ENCODE measurements at regions of chr1 and their contacts with region 1.

Region 1: GRCh38 chr1:37458528-37458927 is 15.9 kb upstream of the ZC3H12A start:
- H3K4me3 Mint-ChIP-seq: no peak overlapping the region
- H3K27ac Mint-ChIP-seq: no peak overlapping the region
- H3K4me1 Mint-ChIP-seq: peaks cover 26% of the 10 kb centered on the region
- H3K27me3 Mint-ChIP-seq: no peaks in the 10 kb centered on the region

Region 2: GRCh38 chr1:37403170-37403569 is 55.4 kb before region 1 on chr1:
- intact Hi-C with region 1: no loop called
- H3K4me3 Mint-ChIP-seq: no peak overlapping the region
- H3K27ac Mint-ChIP-seq: no peak overlapping the region
- H3K4me1 Mint-ChIP-seq: no peaks in the 10 kb centered on the region
- H3K27me3 Mint-ChIP-seq: peaks cover 5% of the 10 kb centered on the region

Region 3: DNA sequence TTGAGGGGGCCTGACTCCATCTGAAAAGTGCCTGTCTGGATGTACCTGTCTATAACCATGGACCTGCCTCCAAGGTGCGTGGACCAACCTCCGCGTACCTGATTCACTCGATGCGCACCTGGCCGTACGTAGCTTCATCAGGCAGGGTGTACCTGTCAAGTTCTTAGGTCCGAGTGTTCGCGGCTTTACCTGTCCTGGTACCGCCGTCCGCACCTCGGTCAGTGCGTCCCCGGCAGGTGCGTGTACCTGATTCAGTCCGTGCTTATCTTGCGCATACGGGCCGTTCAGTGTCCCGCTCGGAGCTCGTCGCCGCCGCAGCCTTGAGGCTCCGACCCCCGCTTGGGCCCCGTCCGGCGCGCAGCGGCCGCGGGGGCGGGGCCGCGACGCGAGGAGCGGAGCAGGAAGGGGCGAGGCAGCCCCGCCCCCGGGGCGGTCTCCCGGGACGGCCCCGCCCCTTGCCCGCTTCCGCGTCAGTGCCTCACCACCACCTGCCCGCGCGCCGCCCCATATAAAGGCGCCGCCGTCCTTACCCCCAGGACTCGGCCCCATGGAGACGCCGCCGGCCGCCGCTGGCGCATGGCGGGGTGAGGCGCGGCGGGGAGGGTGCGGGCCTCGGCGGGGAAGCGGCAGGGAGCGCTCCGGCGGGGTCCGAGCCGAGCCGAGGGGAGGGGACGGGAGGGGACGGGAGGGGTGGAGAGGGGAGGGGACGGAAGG is 15.7 kb after region 1 on chr1 and contains the start of gene ZC3H12A:
- intact Hi-C with region 1: loop called (anchors 2 kb)
- H3K4me3 Mint-ChIP-seq: peak within 1 kb of the TSS; percentile 83
- H3K27ac Mint-ChIP-seq: peak within 1 kb of the TSS; percentile 82
- H3K4me1 Mint-ChIP-seq: peaks cover 74% of the 10 kb centered on the region
- H3K27me3 Mint-ChIP-seq: no peaks in the 10 kb centered on the region

Region 4: GRCh38 chr1:37486680-37487618 is 28.4 kb after region 1 on chr1:
- intact Hi-C with region 1: loop called (anchors 1 kb)
- H3K4me3 Mint-ChIP-seq: peak overlapping the region; percentile 22
- H3K27ac Mint-ChIP-seq: peak overlapping the region; percentile 92
- H3K4me1 Mint-ChIP-seq: peaks cover 67% of the 10 kb centered on the region
- H3K27me3 Mint-ChIP-seq: no peaks in the 10 kb centered on the region

Region 5: GRCh38 chr1:37509181-37509580 is 50.7 kb after region 1 on chr1:
- intact Hi-C with region 1: loop called (anchors 5 kb)
- H3K4me3 Mint-ChIP-seq: no peak overlapping the region
- H3K27ac Mint-ChIP-seq: no peak overlapping the region
- H3K4me1 Mint-ChIP-seq: peaks cover 40% of the 10 kb centered on the region
- H3K27me3 Mint-ChIP-seq: no peaks in the 10 kb centered on the region

Region 6: GRCh38 chr1:37553927-37554808 is 95.6 kb after region 1 on chr1 and contains the start of gene SNIP1:
- intact Hi-C with region 1: loop called (anchors 5 kb)
- H3K4me3 Mint-ChIP-seq: peak within 1 kb of the TSS; percentile 93
- H3K27ac Mint-ChIP-seq: peak within 1 kb of the TSS; percentile 93
- H3K4me1 Mint-ChIP-seq: peaks cover 31% of the 10 kb centered on the region
- H3K27me3 Mint-ChIP-seq: no peaks in the 10 kb centered on the region

Region 7: DNA sequence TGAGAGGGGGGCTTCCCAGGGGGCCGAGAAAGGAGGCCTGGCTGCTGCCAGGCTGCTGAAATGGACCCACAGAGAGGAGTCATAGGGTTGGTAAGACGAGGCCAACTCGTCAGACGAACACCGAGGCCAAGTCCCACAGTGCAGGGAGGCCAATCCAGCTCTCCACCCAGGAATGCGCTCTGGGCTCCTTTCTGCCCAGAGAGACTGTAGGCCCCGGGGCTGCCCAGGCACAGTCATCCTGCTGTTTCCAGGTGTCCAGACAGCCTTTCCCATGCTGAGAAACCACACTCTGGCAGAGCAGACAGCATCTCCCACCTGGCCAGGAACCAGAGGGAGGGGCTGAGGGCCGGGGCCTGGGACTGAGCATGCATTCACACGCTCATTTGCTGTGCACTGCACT is 202.9 kb after region 1 on chr1:
- intact Hi-C with region 1: no loop called
- H3K4me3 Mint-ChIP-seq: no peak overlapping the region
- H3K27ac Mint-ChIP-seq: no peak overlapping the region
- H3K4me1 Mint-ChIP-seq: no peaks in the 10 kb centered on the region
- H3K27me3 Mint-ChIP-seq: peaks cover 3% of the 10 kb centered on the region

Region 8: DNA sequence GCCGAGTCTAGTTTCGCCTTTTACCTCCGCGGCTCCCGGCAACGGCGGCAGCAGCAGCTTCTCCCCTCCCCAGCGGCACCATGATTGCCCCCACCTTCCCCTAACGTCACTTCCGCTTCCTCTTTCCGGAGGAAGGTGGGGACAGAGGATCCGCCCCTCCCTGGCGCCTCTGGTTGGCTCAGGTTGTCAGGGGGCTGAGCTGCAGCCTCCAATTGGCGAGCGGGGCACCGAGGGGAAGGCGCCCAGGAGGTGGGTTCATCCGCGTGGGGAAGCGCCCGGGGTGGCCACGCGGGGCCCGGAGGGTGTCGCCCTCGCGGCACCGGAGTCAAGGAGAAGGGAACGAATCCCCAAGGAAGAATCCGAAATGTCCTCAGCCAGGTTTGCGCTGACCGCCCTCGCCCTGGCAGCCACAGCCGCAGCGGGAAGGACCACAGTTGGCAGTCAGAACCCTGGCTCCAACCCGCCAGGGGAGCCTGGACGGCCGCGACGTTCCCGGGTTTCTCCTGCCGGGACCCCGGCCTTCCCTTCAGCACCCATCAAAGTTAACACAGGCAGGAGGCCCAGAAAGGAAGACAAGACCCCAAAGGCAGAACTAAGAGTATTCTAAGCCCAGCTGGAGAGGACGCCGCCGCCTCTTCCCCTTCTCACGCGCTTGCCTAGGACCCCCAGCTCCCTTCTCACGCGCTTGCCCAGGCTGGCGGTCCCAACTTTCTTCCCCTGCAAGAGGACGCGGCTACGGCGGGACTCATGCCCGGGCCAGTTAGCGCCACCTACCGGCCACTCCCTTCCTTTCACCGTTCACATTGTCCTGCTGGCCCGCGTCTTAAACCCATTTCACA is 401.2 kb after region 1 on chr1 and contains the start of gene MTF1:
- intact Hi-C with region 1: no loop called
- H3K4me3 Mint-ChIP-seq: peak within 1 kb of the TSS; percentile 94
- H3K27ac Mint-ChIP-seq: peak within 1 kb of the TSS; percentile 97
- H3K4me1 Mint-ChIP-seq: peaks cover 30% of the 10 kb centered on the region
- H3K27me3 Mint-ChIP-seq: no peaks in the 10 kb centered on the region